ENCODE measurements at regions of chr4 and their contacts with region 1.

Region 1: DNA sequence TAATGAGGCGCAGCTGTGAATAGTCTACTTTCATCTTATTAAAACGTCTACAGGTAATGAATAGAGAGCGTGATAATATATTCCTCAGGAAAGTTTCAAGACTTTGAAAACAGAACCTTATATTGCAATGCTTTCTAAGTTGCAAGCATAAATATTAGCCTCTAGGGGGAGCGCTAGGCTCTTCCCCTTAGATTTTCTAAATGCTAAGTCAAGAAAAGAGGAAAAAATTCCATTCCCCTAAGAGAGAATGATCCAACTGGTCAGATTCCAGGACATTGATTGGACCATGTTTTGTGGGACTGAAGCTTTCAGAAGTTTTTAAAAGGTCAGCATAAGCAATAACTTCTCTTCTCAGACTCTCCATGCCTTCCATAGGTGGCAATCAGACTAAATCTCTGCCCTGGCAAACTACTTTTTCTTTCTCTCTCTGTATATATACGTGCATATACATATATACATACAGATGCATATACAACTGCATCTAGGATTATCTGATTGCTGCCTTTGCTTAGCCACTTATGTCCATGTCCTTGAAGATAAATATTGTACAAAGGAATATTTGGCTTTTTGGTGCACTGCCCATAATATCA is 492.9 kb downstream of the INPP4B start:
- DNase-seq: peak in 4 of 5 donors; percentile 39 to 52 (median 45)
- H3K4me3 ChIP-seq: peak overlapping the region in 1 of 2 donors; percentile 1
- H3K4me3 Mint-ChIP-seq: peak overlapping the region; percentile 32 to 83 (median 57)
- H3K27ac ChIP-seq: peak overlapping the region; percentile 57
- H3K27ac Mint-ChIP-seq: peak overlapping the region; percentile 5 to 96 (median 85)
- H3K4me1 ChIP-seq: peaks cover 99% of the 10 kb centered on the region
- H3K4me1 Mint-ChIP-seq: peaks cover 86 to 98% (median 93%) of the 10 kb centered on the region in 4 donors
- H3K27me3 ChIP-seq: no peaks in the 10 kb centered on the region
- H3K27me3 Mint-ChIP-seq: no peaks in the 10 kb centered on the region

Region 2: GRCh38 chr4:142043509-142043908 is 309.7 kb before region 1 on chr4:
- CTCF ChIA-PET with region 1: no interaction called
- POLR2A ChIA-PET with region 1: no interaction called
- intact Hi-C with region 1: no loop called
- DNase-seq: no peak
- H3K4me3 ChIP-seq: no peak overlapping the region
- H3K4me3 Mint-ChIP-seq: no peak overlapping the region
- H3K27ac ChIP-seq: no peak overlapping the region
- H3K27ac Mint-ChIP-seq: peak overlapping the region in 4 of 7 donors; percentile 22 to 37 (median 31)
- H3K4me1 ChIP-seq: peaks cover 4% of the 10 kb centered on the region
- H3K4me1 Mint-ChIP-seq: peaks cover 50 to 78% (median 60%) of the 10 kb centered on the region in 4 donors
- H3K27me3 ChIP-seq: no peaks in the 10 kb centered on the region
- H3K27me3 Mint-ChIP-seq: no peaks in the 10 kb centered on the region

Region 3: DNA sequence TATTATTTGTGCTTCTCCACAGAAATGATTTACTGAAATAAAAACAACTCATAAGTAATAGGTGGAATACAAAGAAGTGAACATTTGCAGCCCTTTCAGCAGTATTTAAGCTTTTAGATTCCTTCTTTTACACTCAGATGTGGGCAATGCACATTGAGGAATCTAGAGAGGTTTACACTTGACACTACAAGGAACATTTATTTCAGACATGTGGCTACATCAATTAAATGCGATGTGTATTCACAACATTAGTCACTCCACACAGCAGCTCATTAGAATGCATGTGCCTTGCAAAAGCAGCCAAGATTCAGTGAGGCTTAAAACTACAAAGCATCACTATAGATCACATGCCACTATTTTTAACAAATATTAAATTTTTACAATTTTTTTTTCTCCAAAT is 12.1 kb after region 1 on chr4:
- CTCF ChIA-PET with region 1: interaction called, 15 read pairs
- POLR2A ChIA-PET with region 1: interaction called, 28 read pairs
- intact Hi-C with region 1: loop called (anchors 1 kb)
- DNase-seq: no peak
- H3K4me3 ChIP-seq: no peak overlapping the region
- H3K4me3 Mint-ChIP-seq: peak overlapping the region in 5 of 8 donors; percentile 22 to 69 (median 49)
- H3K27ac ChIP-seq: no peak overlapping the region
- H3K27ac Mint-ChIP-seq: peak overlapping the region in 6 of 7 donors; percentile 6 to 86 (median 72)
- H3K4me1 ChIP-seq: peaks cover 87% of the 10 kb centered on the region
- H3K4me1 Mint-ChIP-seq: peaks cover 67 to 84% (median 74%) of the 10 kb centered on the region in 4 donors
- H3K27me3 ChIP-seq: no peaks in the 10 kb centered on the region
- H3K27me3 Mint-ChIP-seq: no peaks in the 10 kb centered on the region

Region 4: GRCh38 chr4:142386449-142386848 is 33.2 kb after region 1 on chr4:
- CTCF ChIA-PET with region 1: interaction called, 54 read pairs
- POLR2A ChIA-PET with region 1: interaction called, 33 read pairs
- intact Hi-C with region 1: no loop called
- DNase-seq: peak in 4 of 5 donors; percentile 29 to 50 (median 34)
- H3K4me3 ChIP-seq: peak overlapping the region in 1 of 2 donors; percentile 23
- H3K4me3 Mint-ChIP-seq: peak overlapping the region; percentile 59 to 85 (median 75)
- H3K27ac ChIP-seq: peak overlapping the region; percentile 50
- H3K27ac Mint-ChIP-seq: peak overlapping the region; percentile 36 to 88 (median 61)
- H3K4me1 ChIP-seq: peaks cover 85% of the 10 kb centered on the region
- H3K4me1 Mint-ChIP-seq: peaks cover 51 to 85% (median 67%) of the 10 kb centered on the region in 4 donors
- H3K27me3 ChIP-seq: no peaks in the 10 kb centered on the region
- H3K27me3 Mint-ChIP-seq: no peaks in the 10 kb centered on the region

Region 5: DNA sequence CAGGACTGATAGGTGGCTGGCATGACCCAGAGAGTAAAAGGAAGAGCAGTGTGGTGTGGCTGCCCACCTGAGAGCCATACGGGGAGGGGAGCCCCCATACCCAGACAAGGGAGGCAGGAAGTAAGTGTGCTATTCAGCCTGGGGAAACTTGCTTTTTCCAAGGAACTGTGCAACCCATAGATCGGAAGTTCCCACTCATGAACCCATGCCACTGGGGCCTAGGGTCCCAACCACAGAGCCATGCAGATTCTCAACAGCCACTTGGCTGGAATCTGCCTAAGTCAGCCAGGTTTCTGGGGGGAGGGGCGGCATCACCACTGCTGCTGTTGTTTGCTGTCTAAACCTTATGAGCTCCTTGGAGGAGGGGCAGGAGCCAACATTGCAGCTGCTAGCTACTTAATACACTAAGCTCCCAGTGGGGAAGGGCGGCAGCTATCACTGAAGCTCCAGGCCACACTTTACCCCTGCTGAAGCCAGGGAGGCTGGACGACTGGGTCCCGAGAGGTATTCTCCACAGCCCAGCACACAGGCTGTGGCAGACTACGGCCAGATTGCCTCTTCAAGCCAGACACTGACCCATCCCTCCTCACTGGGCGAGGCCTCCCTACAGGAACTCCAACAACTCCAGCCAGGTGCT is 82.5 kb after region 1 on chr4:
- CTCF ChIA-PET with region 1: interaction called, 7 read pairs
- POLR2A ChIA-PET with region 1: no interaction called
- intact Hi-C with region 1: loop called (anchors 1 kb)
- DNase-seq: no peak
- H3K4me3 ChIP-seq: no peak overlapping the region
- H3K4me3 Mint-ChIP-seq: no peak overlapping the region
- H3K27ac ChIP-seq: no peak overlapping the region
- H3K27ac Mint-ChIP-seq: peak overlapping the region in 1 of 7 donors; percentile 63
- H3K4me1 ChIP-seq: peaks cover 16% of the 10 kb centered on the region
- H3K4me1 Mint-ChIP-seq: peaks cover 15 to 30% (median 26%) of the 10 kb centered on the region in 4 donors
- H3K27me3 ChIP-seq: no peaks in the 10 kb centered on the region
- H3K27me3 Mint-ChIP-seq: no peaks in the 10 kb centered on the region

Region 6: DNA sequence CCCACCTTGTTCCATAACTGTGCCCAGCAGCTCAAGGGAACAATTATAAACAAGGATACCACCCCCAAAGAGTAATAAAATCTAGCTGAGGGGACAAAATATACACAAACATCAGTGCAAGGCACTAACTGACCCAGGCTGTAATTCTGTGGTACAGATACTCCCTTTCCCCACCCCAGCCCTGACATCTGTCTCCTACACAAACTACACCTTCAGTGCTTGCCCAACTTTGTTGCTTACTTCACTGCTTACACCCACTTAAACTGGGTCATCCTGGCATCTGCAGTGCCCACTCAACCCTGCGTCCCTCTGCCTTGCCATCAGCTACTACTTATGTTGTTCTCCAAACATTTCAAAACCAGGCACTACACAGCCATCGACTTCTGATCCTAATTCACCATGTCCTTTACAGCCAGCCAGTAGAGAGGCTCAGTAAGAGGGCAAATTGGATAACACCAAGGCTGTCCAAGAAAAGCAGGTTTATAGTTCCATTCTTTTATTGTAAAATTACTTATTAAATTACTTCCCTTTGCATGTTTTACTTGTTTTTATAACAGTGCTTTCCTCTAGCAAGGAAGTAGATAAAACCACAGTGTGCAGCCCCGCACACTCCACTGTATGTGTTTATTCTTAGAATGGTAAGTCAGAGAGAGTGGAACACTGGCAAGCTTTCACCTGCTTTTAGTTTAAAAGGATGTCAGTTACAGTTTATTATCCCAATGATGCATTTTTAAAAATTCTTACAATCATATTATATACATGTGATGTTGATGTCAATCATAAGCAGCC is 343.3 kb after region 1 on chr4:
- CTCF ChIA-PET with region 1: interaction called, 12 read pairs
- POLR2A ChIA-PET with region 1: interaction called, 34 read pairs
- intact Hi-C with region 1: loop called (anchors 5 kb)
- DNase-seq: peak in 4 of 5 donors; percentile 15 to 26 (median 22)
- H3K4me3 ChIP-seq: peak overlapping the region in 1 of 2 donors; percentile 22
- H3K4me3 Mint-ChIP-seq: peak overlapping the region in 7 of 8 donors; percentile 59 to 86 (median 73)
- H3K27ac ChIP-seq: peak overlapping the region; percentile 34
- H3K27ac Mint-ChIP-seq: peak overlapping the region in 6 of 7 donors; percentile 89 to 98 (median 95)
- H3K4me1 ChIP-seq: peaks cover 69% of the 10 kb centered on the region
- H3K4me1 Mint-ChIP-seq: peaks cover 53 to 69% (median 58%) of the 10 kb centered on the region in 4 donors
- H3K27me3 ChIP-seq: no peaks in the 10 kb centered on the region
- H3K27me3 Mint-ChIP-seq: no peaks in the 10 kb centered on the region

Region 7: DNA sequence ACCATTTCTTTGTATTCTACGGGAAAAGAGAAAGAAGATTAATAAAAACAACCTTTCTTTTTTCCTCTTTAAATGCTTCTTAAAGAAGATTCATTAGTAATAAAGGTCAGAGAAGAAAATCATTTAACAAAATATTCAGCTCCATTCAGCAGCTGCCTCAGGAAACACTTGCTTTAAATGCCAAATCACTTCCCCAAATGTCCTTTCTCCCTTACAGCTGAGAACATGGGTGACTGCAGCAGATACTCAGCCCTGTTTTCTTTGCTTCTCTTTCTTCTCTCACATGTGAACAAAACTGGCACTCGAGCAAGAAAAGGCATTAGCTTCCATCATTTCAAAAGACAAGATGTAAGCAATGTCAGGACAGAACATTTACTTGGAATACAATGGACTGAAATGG is 372.6 kb after region 1 on chr4:
- CTCF ChIA-PET with region 1: interaction called, 17 read pairs
- POLR2A ChIA-PET with region 1: interaction called, 3 read pairs
- intact Hi-C with region 1: no loop called
- DNase-seq: no peak
- H3K4me3 ChIP-seq: no peak overlapping the region
- H3K4me3 Mint-ChIP-seq: no peak overlapping the region
- H3K27ac ChIP-seq: no peak overlapping the region
- H3K27ac Mint-ChIP-seq: no peak overlapping the region
- H3K4me1 ChIP-seq: no peaks in the 10 kb centered on the region
- H3K4me1 Mint-ChIP-seq: peaks cover 0 to 6% (median under 1%) of the 10 kb centered on the region in 4 donors
- H3K27me3 ChIP-seq: no peaks in the 10 kb centered on the region
- H3K27me3 Mint-ChIP-seq: peaks cover 0 to 1% of the 10 kb centered on the region in 2 donors

Measured in CD4-positive, alpha-beta memory T cell (primary cell).